Activated T-helper 1 cell treated with anti-CD3 and anti-CD28 coated beads, Interleukin-12 subunit alpha, Interleukin-12 subunit beta, Interleukin-2, Interleukin-4 antibody, amounts not matched to agents 30 ng/mL and 10 ng/mL and 1 ng/mL, durations not matched to agents 14 hours and 24 hours and 36 hours (primary cell): ENCODE measurements at regions of chr16 and their contacts with region 1.

Region 1: DNA sequence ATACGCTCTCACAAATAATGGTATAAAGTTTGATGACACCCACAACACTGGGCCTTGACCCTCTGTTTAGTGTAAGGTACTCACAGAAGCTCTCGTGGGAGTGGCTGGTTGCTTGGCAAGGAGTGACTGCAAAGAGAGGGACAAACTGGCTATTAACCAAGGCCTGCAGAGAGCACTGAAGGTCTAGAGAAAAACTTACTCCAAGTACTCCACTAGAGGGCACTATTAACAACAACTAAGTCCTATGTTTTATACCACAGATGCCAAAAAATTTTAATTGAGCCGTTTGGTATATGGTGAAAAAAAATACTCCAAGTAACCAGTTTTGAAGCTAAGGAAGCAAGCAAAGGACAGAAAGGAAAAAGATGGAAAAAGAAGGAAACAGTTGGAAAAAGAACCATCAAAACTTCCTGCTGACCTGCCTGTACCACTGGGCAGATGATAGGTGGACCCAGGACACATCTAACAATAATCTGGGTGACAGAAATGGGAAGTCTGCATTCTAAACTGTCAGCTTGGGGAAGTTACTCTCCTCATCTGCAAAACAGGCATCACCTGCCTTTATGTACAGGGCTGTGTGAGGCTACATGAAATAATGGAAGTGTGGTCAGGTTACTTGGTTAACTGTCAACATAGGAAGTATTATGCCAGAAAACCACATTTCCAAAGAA is 23.2 kb downstream of the DYNC1LI2 start:
- DNase-seq: no peak
- H3K4me3 Mint-ChIP-seq: no peak overlapping the region
- H3K27ac Mint-ChIP-seq: no peak overlapping the region
- H3K4me1 Mint-ChIP-seq: peaks cover 16% of the 10 kb centered on the region
- H3K27me3 Mint-ChIP-seq: no peaks in the 10 kb centered on the region

Region 2: DNA sequence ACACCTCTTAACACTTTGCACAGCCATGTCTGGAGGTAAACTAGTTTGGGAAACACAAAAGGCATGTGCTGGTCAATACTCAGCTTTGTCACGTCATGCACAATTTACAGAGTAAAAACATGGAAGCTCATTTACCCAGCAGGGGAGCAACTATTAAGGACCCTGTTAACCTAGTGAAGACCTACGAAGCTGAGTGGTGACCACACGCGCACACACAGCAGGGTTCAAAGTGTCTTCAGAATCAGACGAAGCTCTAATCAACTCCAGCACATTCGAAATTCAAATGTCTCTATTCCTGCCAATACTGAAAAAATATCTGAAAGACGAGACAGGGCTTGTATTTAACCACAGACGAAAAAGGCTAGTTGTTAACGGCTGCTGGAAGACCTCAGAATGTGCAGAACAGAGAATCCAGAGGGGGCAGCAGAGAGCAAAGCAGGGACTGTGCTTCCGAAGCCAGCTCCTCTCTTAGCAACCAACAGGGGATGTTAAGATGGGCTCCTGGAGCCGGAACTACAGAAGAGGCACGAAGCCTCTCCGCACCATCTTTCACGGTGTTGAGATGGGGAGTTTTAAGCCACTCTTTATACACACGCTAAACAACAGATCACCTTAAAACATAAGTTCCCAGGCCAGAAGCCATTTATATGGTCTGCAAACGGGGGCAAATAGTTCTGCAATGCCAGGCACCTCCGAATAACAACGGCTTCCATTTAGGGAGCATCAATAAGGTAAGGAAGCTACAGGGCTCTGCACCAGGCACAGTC is 77.4 kb before region 1 on chr16:
- intact Hi-C with region 1: loop called (anchors 2 kb)
- DNase-seq: peak; percentile 68
- H3K4me3 Mint-ChIP-seq: no peak overlapping the region
- H3K27ac Mint-ChIP-seq: no peak overlapping the region
- H3K4me1 Mint-ChIP-seq: peaks cover 21% of the 10 kb centered on the region
- H3K27me3 Mint-ChIP-seq: peaks cover 2% of the 10 kb centered on the region